ENCODE measurements at regions of chr2 and their contacts with region 1.

Region 1: GRCh38 chr2:165015052-165015642 is 59.8 kb upstream of the SLC38A11 start:
- DNase-seq: peak; percentile 45
- CTCF ChIP-seq: peak; percentile 90

Region 2: GRCh38 chr2:163580769-163581168 is 1434.4 kb before region 1 on chr2:
- in situ Hi-C with region 1: no loop called
- DNase-seq: no peak
- CTCF ChIP-seq: no peak

Region 3: GRCh38 chr2:164785457-164785856 is 229.7 kb before region 1 on chr2:
- in situ Hi-C with region 1: no loop called
- DNase-seq: no peak
- CTCF ChIP-seq: no peak

Region 4: DNA sequence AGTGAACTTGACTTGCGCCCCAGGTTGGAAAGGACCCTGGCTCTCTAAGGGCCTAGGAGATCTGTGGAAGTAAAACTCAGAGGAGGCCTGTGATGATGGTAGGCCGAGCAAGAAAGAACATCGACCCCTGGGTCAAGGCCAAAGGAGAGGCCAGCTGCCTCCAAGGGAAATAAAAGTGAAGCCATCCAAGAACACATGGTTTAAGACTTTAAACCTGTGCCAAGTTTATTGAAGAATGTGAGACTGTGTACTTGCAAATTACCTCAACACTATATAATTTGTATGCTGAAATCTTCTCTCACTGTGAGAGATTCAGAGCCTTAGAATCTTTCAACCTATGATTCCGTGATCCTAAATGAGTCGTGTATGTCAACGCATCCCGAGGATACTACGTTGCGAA is 132.9 kb before region 1 on chr2:
- in situ Hi-C with region 1: no loop called
- DNase-seq: no peak
- CTCF ChIP-seq: no peak

Region 5: DNA sequence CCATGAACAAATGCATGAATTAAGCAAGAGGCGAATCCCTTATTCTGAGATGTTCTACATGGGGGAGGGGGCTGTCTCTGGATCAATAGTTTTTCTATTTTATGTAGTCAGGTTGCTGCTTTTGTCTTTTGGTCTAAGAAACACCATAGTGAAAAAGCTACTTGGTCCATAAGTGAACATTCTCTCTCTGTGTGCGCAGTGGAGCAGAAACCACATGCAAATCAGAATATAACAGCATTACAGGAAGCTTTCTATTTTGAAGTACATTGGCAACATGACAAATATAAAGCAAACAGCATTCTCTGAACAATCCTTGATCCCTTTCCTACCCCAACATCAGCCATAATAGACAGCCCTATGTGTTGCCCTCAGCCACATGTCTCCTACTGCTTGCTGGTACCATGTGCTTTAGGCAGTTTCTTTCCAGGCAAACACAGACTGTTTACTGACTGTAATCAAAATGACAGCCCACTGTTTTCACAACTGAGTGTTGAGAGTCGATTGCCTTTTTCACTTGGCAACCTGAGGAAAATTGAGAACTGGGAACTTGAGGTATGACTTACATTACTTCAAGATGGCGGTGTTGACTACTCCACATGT is 178.1 kb after region 1 on chr2:
- in situ Hi-C with region 1: loop called (anchors 25 kb)
- DNase-seq: peak; percentile 6
- CTCF ChIP-seq: no peak

Measured in GM13977 (cell line).